ENCODE measurements at regions of chr15 and their contacts with region 1.

Region 1: DNA sequence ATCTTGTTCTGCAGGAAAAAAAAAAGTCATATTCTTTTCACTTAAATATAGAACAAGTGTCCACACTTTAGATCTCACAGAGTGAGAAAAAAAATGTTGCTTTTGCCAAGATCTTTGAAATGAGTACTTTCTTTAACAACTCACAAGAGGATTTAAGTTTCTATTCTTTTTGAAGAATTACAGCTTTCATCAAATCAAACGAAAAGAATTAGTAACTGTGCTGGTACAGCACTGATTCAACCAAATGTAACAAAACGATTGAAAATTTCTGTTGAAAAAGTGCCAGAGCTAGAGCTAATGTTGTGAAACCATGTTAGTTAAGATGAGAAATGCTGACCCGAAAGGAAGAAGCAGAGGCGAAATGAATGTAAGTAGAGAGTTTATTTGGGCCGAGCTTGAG is 300.2 kb downstream of the GABRB3 start:
- DNase-seq: no peak
- H3K4me3 ChIP-seq: no peak overlapping the region
- H3K27ac ChIP-seq: no peak overlapping the region
- H3K4me1 ChIP-seq: no peaks in the 10 kb centered on the region
- H3K27me3 ChIP-seq: no peaks in the 10 kb centered on the region
- CTCF ChIP-seq: no peak

Region 2: DNA sequence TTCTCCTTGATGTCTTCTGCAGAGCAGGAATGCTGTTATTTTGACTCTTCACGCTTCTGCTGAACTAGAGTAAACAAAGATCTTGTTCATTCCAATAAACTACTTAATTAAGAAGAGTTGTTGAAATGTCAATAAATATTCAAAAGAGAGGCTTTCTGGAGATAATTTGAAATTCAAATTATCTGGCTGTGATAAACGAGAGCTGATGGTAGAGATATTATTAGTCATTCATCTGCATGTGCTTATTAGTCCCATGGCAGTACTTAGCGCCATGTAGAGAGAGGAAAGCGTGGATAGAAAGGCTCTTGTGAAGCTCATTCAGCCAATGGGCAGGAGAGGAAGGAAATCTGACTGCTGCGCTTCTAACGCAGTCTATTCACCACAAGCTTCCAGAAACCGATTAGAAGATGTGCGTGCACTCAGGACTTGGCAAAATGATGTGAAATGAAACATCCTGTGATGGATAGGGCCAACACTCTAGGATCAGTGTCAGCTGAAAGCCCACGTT is 49.1 kb after region 1 on chr15:
- CTCF ChIA-PET with region 1: no interaction called
- dilution Hi-C with region 1: loop called (anchors 5 kb)
- in situ Hi-C with region 1: no loop called
- intact Hi-C with region 1: no loop called
- DNase-seq: no peak
- H3K4me3 ChIP-seq: no peak overlapping the region
- H3K27ac ChIP-seq: no peak overlapping the region
- H3K4me1 ChIP-seq: no peaks in the 10 kb centered on the region
- H3K27me3 ChIP-seq: no peaks in the 10 kb centered on the region
- CTCF ChIP-seq: no peak

Region 3: GRCh38 chr15:26590676-26591075 is 118.0 kb after region 1 on chr15:
- CTCF ChIA-PET with region 1: no interaction called
- dilution Hi-C with region 1: no loop called
- in situ Hi-C with region 1: no loop called
- intact Hi-C with region 1: no loop called
- DNase-seq: no peak
- H3K4me3 ChIP-seq: no peak overlapping the region
- H3K27ac ChIP-seq: no peak overlapping the region
- H3K4me1 ChIP-seq: no peaks in the 10 kb centered on the region
- H3K27me3 ChIP-seq: no peaks in the 10 kb centered on the region
- CTCF ChIP-seq: no peak

Region 4: GRCh38 chr15:26806144-26806543 is 333.5 kb after region 1 on chr15:
- CTCF ChIA-PET with region 1: no interaction called
- dilution Hi-C with region 1: no loop called
- in situ Hi-C with region 1: no loop called
- intact Hi-C with region 1: no loop called
- DNase-seq: no peak
- H3K4me3 ChIP-seq: no peak overlapping the region
- H3K27ac ChIP-seq: no peak overlapping the region
- H3K4me1 ChIP-seq: no peaks in the 10 kb centered on the region
- H3K27me3 ChIP-seq: no peaks in the 10 kb centered on the region
- CTCF ChIP-seq: no peak